ENCODE measurements at regions of chr17 and their contacts with region 1.

Region 1: DNA sequence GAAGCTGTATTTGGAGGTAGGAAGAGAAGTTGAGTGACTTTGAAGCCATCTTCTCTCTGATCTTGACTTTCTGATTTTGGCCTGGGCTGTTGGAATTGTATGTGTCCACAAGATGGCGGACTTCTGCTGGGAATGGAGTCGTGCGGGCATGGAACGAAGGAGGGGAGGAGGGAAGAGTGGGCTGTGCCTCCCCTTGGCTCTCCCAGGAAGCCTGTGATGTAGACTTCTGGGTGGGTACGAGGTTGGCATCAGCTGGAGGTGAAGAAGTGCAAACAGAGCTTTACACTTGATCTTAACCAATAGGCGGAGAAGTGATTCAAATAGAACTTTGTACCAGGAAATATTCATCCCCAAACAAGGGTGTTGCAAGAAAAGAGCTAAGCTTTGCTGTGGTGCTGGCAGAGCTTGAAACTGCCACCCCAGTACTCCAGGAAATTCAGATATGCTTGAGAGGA is 7.4 kb upstream of the TMEM220 start:
- DNase-seq: peak; percentile 72 to 92
- ATAC-seq: peak; percentile 95 to 96
- H3K4me3 ChIP-seq: no peak overlapping the region
- H3K27ac ChIP-seq: peak overlapping the region in 1 of 2 experiments; percentile 59; a peak in 4 of 6 replicates
- H3K4me1 ChIP-seq: peaks cover 18% of the 10 kb centered on the region
- CTCF ChIP-seq: peak; percentile 93
- EP300 ChIP-seq: no peak; a peak in 1 of 5 replicates
- POLR2A ChIP-seq: no peak
- RAD21 ChIP-seq: peak; percentile 88 to 92

Region 2: GRCh38 chr17:10724546-10725195 is 12.5 kb before region 1 on chr17:
- CTCF ChIA-PET with region 1: interaction called, 10 read pairs
- POLR2A ChIA-PET with region 1: no interaction called
- DNase-seq: no peak
- ATAC-seq: no peak
- H3K4me3 ChIP-seq: no peak overlapping the region
- H3K27ac ChIP-seq: no peak overlapping the region
- H3K4me1 ChIP-seq: no peaks in the 10 kb centered on the region
- CTCF ChIP-seq: no peak
- EP300 ChIP-seq: no peak
- POLR2A ChIP-seq: no peak
- RAD21 ChIP-seq: no peak

Region 3: DNA sequence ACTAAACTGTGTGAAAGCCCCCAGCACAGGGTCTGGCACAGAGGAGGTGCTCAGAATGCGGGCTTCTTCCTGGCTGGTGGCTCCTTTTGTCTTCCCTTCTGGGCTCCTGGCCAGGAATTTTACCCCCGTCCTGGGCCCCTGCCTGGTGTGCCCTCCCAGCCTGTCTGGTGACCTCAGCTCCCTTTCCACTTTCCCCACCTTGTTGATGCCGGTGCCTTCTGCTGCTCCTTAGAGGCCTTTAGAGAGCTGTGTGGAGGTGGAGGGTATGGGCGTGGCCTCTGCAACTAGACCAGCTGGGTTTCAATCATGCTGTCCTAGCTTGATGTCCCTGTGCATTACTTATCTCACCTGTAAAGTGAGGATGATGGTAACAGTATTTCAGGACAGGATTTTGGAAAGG is 83.9 kb after region 1 on chr17:
- CTCF ChIA-PET with region 1: interaction called, 10 read pairs
- POLR2A ChIA-PET with region 1: no interaction called
- DNase-seq: no peak
- ATAC-seq: no peak
- H3K4me3 ChIP-seq: no peak overlapping the region
- H3K27ac ChIP-seq: no peak overlapping the region
- H3K4me1 ChIP-seq: no peaks in the 10 kb centered on the region
- CTCF ChIP-seq: no peak
- EP300 ChIP-seq: no peak
- POLR2A ChIP-seq: no peak
- RAD21 ChIP-seq: no peak

Region 4: GRCh38 chr17:10870336-10871050 is 133.3 kb after region 1 on chr17:
- CTCF ChIA-PET with region 1: interaction called, 10 read pairs
- POLR2A ChIA-PET with region 1: no interaction called
- DNase-seq: no peak
- ATAC-seq: no peak
- H3K4me3 ChIP-seq: no peak overlapping the region
- H3K27ac ChIP-seq: no peak overlapping the region
- H3K4me1 ChIP-seq: no peaks in the 10 kb centered on the region
- CTCF ChIP-seq: no peak
- EP300 ChIP-seq: no peak
- POLR2A ChIP-seq: no peak
- RAD21 ChIP-seq: no peak